Ovary (tissue), 10 donors: ENCODE measurements at regions of chr2 and their contacts with region 1.

Region 1: GRCh38 chr2:55856936-55857335 is 66.6 kb downstream of the EFEMP1 start:
- DNase-seq: no peak
- H3K4me3 ChIP-seq: no peak overlapping the region
- H3K27ac ChIP-seq: no peak overlapping the region
- H3K4me1 ChIP-seq: peaks cover 8% of the 10 kb centered on the region
- H3K27me3 ChIP-seq: no peaks in the 10 kb centered on the region
- CTCF ChIP-seq: no peak
- EP300 ChIP-seq: no peak
- POLR2A ChIP-seq: no peak

Region 2: GRCh38 chr2:55916473-55917049 is 59.6 kb after region 1 on chr2:
- intact Hi-C with region 1: loop called in 1 of 4 experiments (anchors 5 kb)
- DNase-seq: no peak
- H3K4me3 ChIP-seq: no peak overlapping the region
- H3K27ac ChIP-seq: no peak overlapping the region
- H3K4me1 ChIP-seq: no peaks in the 10 kb centered on the region
- H3K27me3 ChIP-seq: no peaks in the 10 kb centered on the region
- CTCF ChIP-seq: no peak
- EP300 ChIP-seq: no peak
- POLR2A ChIP-seq: no peak